AG04450 (cell line): ENCODE measurements at regions of chr5 and their contacts with region 1.

Region 1: DNA sequence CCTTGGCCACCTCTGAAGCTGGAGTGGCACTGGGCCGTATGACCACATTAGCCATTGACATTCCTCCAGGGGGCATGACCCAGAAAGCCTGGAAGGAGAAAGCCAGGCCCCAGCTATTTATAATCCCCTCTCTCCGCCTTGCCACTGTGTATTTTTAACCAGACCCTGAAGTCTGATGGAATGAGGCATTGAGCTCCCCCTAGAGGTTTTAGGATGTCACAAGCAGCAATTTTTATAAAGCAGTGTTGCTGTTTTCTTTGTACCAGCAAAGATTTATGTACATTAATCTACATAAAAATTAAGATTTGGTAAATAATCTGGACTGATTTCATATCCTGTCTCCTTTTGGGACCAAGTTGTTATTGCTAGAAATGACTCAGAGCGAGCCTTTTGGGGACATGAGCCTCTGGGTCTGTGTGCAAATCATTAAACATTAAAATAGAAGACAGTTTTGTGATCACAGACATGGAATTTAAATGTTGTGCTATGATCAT is 127.1 kb downstream of the TRIO start:
- DNase-seq: no peak
- H3K4me3 ChIP-seq: no peak overlapping the region
- H3K27ac ChIP-seq: peak overlapping the region; percentile 41
- H3K27me3 ChIP-seq: no peaks in the 10 kb centered on the region
- CTCF ChIP-seq: peak; percentile 82

Region 2: DNA sequence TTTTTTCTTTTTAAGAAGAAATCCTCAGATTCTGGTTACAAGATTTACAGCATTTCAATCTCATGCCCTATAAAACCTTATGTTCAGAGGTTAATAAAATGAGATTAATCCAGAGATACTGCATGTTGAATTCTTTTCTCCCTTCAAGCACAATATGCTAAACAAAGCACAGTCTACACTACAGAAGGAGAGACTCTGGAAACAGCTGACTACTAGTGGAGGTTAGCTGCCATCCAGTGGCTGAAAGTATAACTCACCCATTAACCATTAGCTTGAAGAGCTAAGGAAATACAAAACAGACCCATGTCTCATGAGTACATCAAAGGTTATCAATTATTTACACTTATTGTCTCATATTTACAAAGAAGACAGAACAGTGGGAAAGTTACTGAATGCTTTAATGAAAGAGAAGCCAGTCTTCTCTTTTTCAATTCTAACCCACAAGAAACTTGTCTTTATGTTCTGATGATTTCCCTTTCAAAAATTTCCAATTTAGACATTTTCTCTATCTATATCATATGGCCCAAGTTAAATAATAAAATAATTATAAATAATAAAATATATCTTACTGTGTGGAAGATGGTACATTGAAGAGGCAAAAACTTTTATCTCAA is 313.1 kb before region 1 on chr5:
- CTCF ChIA-PET with region 1: no interaction called
- POLR2A ChIA-PET with region 1: no interaction called
- DNase-seq: peak; percentile 32
- H3K4me3 ChIP-seq: no peak overlapping the region
- H3K27ac ChIP-seq: no peak overlapping the region
- H3K27me3 ChIP-seq: no peaks in the 10 kb centered on the region
- CTCF ChIP-seq: peak; percentile 77

Region 3: DNA sequence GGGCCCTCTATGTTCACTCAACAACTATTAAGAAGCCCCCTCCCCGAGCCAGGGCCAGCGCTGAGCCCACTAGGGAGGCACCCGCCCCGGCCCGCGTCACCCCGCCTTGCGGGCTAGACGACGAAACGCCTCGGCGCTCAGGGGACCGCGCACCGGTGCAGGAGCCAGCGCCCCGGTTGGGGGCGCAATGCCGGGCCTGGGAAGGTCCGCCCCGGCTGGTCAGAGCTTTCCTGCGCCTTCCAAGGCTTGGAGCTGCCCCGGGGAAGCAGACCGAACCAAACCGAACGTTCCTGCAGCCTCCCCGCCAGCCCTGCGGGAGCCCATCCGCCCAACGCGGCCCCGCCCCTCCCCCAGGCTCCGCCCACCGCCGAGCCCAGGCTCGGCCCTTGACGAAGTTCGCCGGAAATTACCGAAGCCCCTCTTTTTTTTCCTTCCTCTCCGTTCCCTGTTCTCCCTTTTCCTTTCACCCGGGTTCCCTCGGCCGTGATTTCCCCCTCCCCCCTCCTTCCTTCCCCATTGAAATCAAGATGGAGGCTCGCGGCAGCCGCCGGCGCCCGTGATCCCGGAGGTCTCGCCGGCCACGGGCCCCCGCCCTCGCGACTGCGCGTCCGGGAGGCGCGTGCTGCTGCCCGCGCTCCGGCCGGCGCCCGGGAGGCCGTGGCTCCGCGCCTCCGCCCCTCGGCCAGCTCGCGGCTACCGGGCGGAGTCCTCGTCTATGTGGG is 127.3 kb before region 1 on chr5 and contains the start of gene TRIO:
- CTCF ChIA-PET with region 1: interaction called, 10 read pairs
- POLR2A ChIA-PET with region 1: interaction called, 3 read pairs
- DNase-seq: peak; percentile 77
- H3K4me3 ChIP-seq: peak within 1 kb of the TSS; percentile 84
- H3K27ac ChIP-seq: peak within 1 kb of the TSS; percentile 98
- H3K27me3 ChIP-seq: no peaks in the 10 kb centered on the region
- CTCF ChIP-seq: peak; percentile 45
- polyA plus RNA-seq, gene TRIO: 268 TPM in 2 replicates

Region 4: GRCh38 chr5:14240359-14240758 is 29.9 kb before region 1 on chr5:
- CTCF ChIA-PET with region 1: interaction called, 14 read pairs
- POLR2A ChIA-PET with region 1: interaction called, 5 read pairs
- DNase-seq: no peak
- H3K4me3 ChIP-seq: no peak overlapping the region
- H3K27ac ChIP-seq: no peak overlapping the region
- H3K27me3 ChIP-seq: no peaks in the 10 kb centered on the region
- CTCF ChIP-seq: no peak

Region 5: DNA sequence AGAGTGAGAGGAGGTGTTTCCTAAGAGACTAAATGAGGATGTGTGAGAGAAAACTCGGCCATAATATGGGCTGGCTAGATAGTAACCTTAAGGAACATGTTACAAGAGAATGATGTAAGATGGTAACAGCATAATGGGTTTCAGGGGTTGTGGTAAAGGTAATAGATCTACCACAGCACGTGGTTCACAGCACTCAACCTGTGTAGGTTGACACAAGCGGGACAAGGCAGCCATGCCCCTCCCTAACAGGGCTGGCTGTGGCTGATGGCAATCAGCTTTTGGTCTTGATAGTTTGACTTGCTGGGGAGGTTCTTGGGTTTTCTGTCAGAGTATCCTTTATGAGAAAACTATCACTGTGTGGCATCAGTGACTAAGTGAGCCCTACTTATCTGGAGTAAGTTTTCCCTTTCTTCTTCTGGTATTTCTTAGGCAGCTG is 11.5 kb after region 1 on chr5:
- CTCF ChIA-PET with region 1: interaction called, 34 read pairs
- POLR2A ChIA-PET with region 1: interaction called, 3 read pairs
- DNase-seq: no peak
- H3K4me3 ChIP-seq: no peak overlapping the region
- H3K27ac ChIP-seq: no peak overlapping the region
- H3K27me3 ChIP-seq: no peaks in the 10 kb centered on the region
- CTCF ChIP-seq: no peak

Region 6: GRCh38 chr5:14286574-14287421 is 16.5 kb after region 1 on chr5:
- CTCF ChIA-PET with region 1: interaction called, 34 read pairs
- POLR2A ChIA-PET with region 1: no interaction called
- DNase-seq: no peak
- H3K4me3 ChIP-seq: no peak overlapping the region
- H3K27ac ChIP-seq: no peak overlapping the region
- H3K27me3 ChIP-seq: no peaks in the 10 kb centered on the region
- CTCF ChIP-seq: no peak